Aorta (tissue), 5 donors: ENCODE measurements at regions of chr2 and their contacts with region 1.

Region 1: GRCh38 chr2:43133708-43134570 is 92.5 kb downstream of the ZFP36L2 start:
- DNase-seq: peak in 1 of 2 donors; percentile 77
- ATAC-seq: no peak
- H3K4me3 ChIP-seq: no peak overlapping the region
- H3K27ac ChIP-seq: no peak overlapping the region
- H3K4me1 ChIP-seq: no peaks in the 10 kb centered on the region
- H3K27me3 ChIP-seq: no peaks in the 10 kb centered on the region

Region 2: GRCh38 chr2:43199492-43200481 is 65.8 kb after region 1 on chr2:
- intact Hi-C with region 1: loop called in 1 of 2 experiments (anchors 2 kb)
- DNase-seq: no peak
- ATAC-seq: peak; percentile 5
- H3K4me3 ChIP-seq: no peak overlapping the region
- H3K27ac ChIP-seq: no peak overlapping the region
- H3K4me1 ChIP-seq: no peaks in the 10 kb centered on the region
- H3K27me3 ChIP-seq: no peaks in the 10 kb centered on the region

Region 3: GRCh38 chr2:43255296-43255910 is 121.5 kb after region 1 on chr2:
- intact Hi-C with region 1: no loop called
- DNase-seq: no peak
- ATAC-seq: no peak
- H3K4me3 ChIP-seq: no peak overlapping the region
- H3K27ac ChIP-seq: no peak overlapping the region
- H3K4me1 ChIP-seq: peaks cover 0 to 5% of the 10 kb centered on the region in 2 donors
- H3K27me3 ChIP-seq: no peaks in the 10 kb centered on the region